PC-9 (cell line): ENCODE measurements at regions of chr17 and their contacts with region 1.

Region 1: DNA sequence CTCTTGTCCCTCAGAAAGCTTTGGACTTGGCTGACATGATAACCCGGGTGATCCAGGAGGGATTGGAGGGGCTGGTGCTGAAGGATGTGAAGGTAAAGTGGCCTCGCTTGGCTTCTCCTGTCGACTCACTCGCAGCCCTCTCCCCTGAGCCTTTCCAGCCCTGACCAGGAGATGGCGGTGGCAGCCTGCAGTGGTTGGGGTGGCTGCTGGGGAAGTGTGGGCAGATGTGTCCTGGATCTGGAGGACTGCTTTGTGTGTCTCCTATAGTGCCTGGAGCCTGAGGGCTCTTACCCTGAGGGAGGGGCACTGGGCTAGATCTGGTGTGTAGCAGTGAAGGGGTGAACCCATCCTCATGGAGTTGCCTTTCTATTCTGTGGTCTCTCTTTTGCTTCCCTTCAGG is 17.9 kb downstream of the LIG3 start:
- DNase-seq: peak in 1 of 2 experiments; percentile 63
- H3K4me3 ChIP-seq: no peak overlapping the region
- H3K27ac ChIP-seq: no peak overlapping the region
- H3K4me1 ChIP-seq: peaks cover 20% of the 10 kb centered on the region
- H3K27me3 ChIP-seq: no peaks in the 10 kb centered on the region
- CTCF ChIP-seq: peak; percentile 88

Region 2: GRCh38 chr17:34420254-34420766 is 577.9 kb before region 1 on chr17:
- CTCF ChIA-PET with region 1: no interaction called
- POLR2A ChIA-PET with region 1: no interaction called
- intact Hi-C with region 1: loop called (anchors 5 kb)
- DNase-seq: peak; percentile 46 to 47
- H3K4me3 ChIP-seq: no peak overlapping the region
- H3K27ac ChIP-seq: no peak overlapping the region
- H3K4me1 ChIP-seq: no peaks in the 10 kb centered on the region
- H3K27me3 ChIP-seq: peaks cover 36% of the 10 kb centered on the region
- CTCF ChIP-seq: peak; percentile 92

Region 3: GRCh38 chr17:35022536-35023063 is 24.4 kb after region 1 on chr17:
- CTCF ChIA-PET with region 1: no interaction called
- POLR2A ChIA-PET with region 1: no interaction called
- intact Hi-C with region 1: loop called (anchors 1 kb)
- DNase-seq: peak in 1 of 2 experiments; percentile 61
- H3K4me3 ChIP-seq: no peak overlapping the region
- H3K27ac ChIP-seq: peak overlapping the region; percentile 40
- H3K4me1 ChIP-seq: peaks cover 51% of the 10 kb centered on the region
- H3K27me3 ChIP-seq: no peaks in the 10 kb centered on the region
- CTCF ChIP-seq: no peak

Region 4: DNA sequence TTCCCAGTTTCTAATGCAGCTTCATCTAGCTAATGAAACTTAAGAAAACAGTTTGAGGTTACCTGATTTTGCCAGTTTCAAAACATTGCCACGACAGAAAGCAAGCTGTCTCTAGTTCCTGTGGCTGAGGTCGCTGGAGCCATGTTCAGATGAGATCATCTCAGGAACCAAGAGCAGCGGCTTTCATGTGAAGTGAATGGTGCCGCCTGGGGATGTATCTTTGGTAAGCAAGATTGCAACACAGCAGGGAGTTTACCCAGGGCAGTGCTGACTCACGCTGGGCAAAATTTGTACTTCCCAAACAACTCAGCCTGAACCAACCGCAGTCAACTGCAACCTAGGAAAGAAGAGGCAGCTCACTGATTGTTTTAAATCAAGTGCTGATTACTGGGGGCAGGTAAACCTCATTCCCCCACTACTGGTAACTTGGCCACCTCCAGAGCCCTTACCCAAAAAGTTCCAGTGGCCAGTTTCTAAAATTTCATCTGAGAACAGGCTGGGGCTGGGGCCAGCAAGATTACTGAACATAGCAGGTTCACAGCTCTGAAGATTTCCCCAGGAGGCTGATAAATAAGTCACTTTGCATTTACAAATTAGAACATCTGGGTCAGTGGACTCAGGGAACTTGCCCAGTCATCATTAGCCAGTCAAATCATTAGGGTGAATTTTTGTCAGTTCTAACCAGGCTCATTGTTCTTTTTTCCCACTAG is 65.5 kb after region 1 on chr17 and contains the start of gene RFFL:
- CTCF ChIA-PET with region 1: no interaction called
- POLR2A ChIA-PET with region 1: no interaction called
- intact Hi-C with region 1: loop called (anchors 1 kb)
- DNase-seq: peak; percentile 79 to 96
- H3K4me3 ChIP-seq: peak within 1 kb of the TSS; percentile 44; the same call in 1 of the 2 replicates
- H3K27ac ChIP-seq: peak within 1 kb of the TSS; percentile 99
- H3K4me1 ChIP-seq: peaks cover 37% of the 10 kb centered on the region
- H3K27me3 ChIP-seq: no peaks in the 10 kb centered on the region
- CTCF ChIP-seq: no peak
- total RNA-seq, gene RFFL: 36.7 and 38.1 TPM in 2 replicates

Region 5: GRCh38 chr17:35088881-35089585 is 90.8 kb after region 1 on chr17:
- CTCF ChIA-PET with region 1: no interaction called
- POLR2A ChIA-PET with region 1: no interaction called
- intact Hi-C with region 1: loop called (anchors 1 kb)
- DNase-seq: peak; percentile 55 to 84
- H3K4me3 ChIP-seq: peak overlapping the region; percentile 80
- H3K27ac ChIP-seq: peak overlapping the region; percentile 78
- H3K4me1 ChIP-seq: peaks cover 42% of the 10 kb centered on the region
- H3K27me3 ChIP-seq: no peaks in the 10 kb centered on the region
- CTCF ChIP-seq: no peak; the same call in 1 of the 2 replicates

Region 6: GRCh38 chr17:35119368-35120165 is 121.4 kb after region 1 on chr17 and contains the start of gene RAD51D:
- CTCF ChIA-PET with region 1: no interaction called
- POLR2A ChIA-PET with region 1: interaction called, 3 read pairs
- intact Hi-C with region 1: loop called (anchors 1 kb)
- DNase-seq: peak; percentile 47 to 76
- H3K4me3 ChIP-seq: peak within 1 kb of the TSS; percentile 74
- H3K27ac ChIP-seq: no peak within 1 kb of the TSS
- H3K4me1 ChIP-seq: peaks cover 9% of the 10 kb centered on the region; the same call in 1 of the 2 replicates
- H3K27me3 ChIP-seq: no peaks in the 10 kb centered on the region
- CTCF ChIP-seq: peak; percentile 83
- total RNA-seq, gene RAD51D: 7.8 and 9.7 TPM in 2 replicates

Region 7: DNA sequence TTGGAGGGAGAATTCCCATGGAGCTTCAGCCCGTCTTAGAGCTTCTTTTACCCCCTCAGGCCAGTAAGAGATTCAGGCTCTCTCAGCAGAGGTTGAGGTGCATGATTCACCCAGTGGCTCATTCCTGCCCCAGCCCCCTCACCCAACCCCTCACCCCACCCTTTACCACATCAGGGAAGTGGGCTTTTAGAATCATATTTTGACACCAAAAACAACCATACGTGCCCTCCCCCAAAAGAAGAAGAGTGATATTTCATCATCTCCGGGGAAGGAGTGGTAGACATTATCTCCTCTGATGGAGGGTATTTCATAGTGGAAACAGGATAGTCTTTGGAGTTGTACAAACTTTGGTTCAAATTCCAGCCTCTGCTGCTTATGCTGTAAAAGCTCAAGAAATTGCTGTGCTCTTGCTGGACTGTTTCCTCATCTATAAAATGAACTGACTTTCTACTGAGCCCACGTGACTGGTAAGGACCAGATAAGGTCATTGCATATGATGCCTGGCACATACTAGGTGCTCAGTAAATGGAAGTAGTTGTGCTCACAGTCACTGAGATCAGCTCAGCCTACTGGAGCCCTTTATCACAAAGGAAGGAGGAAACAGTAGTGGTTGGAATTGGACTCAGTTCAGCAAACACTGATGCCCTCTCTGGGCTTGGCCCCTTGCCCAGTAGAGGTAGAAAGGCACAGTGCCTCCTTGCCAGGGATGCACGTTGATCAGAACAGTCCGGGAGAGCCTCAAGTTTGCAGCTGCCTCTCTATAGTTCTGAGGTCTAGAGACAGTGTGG is 900.3 kb after region 1 on chr17:
- CTCF ChIA-PET with region 1: no interaction called
- POLR2A ChIA-PET with region 1: no interaction called
- intact Hi-C with region 1: no loop called
- DNase-seq: peak in 1 of 2 experiments; percentile 31
- H3K4me3 ChIP-seq: no peak overlapping the region
- H3K27ac ChIP-seq: no peak overlapping the region
- H3K4me1 ChIP-seq: no peaks in the 10 kb centered on the region
- H3K27me3 ChIP-seq: no peaks in the 10 kb centered on the region
- CTCF ChIP-seq: no peak